Activated CD8-positive, alpha-beta T cell treated with anti-CD3 and anti-CD28 coated beads, Interleukin-2, amount 10 ng/mL, durations not matched to agents 7 days and 5 days (primary cell): ENCODE measurements at regions of chr19 and their contacts with region 1.

Region 1: DNA sequence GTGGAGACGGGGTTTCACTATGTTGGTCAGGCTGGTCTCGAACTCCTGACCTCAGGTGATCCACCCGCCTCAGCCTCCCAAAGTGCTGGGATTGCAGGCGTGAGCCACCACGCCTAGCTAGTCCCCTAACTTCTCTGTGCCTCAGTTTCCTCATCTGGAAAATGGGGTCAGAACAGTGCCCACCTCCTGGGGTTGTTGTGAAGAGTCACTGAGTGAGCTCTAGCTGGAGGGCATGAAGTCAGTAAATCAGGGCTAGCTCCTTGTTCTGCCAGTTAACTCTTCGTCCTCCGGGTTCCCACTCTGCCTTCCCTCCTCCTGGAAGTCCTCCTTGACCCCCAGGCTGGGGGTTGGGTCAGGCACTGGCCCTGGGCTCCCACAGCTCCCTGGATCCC is 9.5 kb downstream of the EHD2 start:
- DNase-seq: no peak
- ATAC-seq: no peak
- H3K4me3 Mint-ChIP-seq: no peak overlapping the region
- H3K27ac Mint-ChIP-seq: no peak overlapping the region
- H3K4me1 Mint-ChIP-seq: no peaks in the 10 kb centered on the region
- H3K27me3 Mint-ChIP-seq: peaks cover 8% of the 10 kb centered on the region

Region 2: DNA sequence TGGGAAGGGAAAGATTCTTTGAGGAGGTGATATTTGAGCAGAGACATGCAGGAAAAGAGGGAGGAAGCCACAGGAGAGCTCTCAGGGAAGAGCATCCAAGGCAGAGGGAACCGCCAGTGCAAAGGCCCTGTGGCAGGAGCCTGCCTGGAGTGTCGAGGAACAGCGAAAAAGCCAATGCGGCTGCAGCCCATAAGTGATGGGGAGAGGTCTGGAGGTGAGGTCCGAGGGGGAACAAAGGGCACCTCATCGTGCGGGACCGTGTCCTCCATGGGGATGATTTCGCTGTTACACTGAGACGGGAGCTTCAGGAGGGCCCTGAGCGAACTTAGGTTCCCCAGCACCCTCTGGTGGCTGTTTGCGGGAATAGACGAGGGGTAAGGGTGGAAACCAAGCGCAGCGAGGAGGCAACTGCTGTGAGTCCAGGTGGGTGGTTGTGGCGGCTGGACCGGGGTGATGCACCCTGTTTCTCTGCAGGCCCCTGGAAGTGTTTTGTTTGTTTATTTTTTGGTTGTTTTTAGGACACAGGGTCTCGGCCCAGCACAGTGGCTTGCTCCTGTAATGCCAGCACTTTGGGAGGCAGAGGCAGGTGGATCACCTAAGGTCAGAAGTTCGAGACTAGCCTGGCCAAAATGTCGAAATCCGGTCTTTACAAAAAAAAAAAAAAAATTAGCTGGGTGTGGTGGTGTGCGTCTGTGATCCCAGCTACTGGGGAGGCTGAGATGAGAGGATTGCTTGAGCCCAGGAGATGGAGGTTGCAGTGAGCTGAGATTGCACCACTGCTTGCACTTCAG is 15.4 kb before region 1 on chr19:
- CTCF ChIA-PET with region 1: interaction called, 33 read pairs
- POLR2A ChIA-PET with region 1: no interaction called
- DNase-seq: peak; percentile 87
- ATAC-seq: peak; percentile 96
- H3K4me3 Mint-ChIP-seq: no peak overlapping the region
- H3K27ac Mint-ChIP-seq: no peak overlapping the region
- H3K4me1 Mint-ChIP-seq: peaks cover 5% of the 10 kb centered on the region
- H3K27me3 Mint-ChIP-seq: peaks cover 5% of the 10 kb centered on the region

Region 3: DNA sequence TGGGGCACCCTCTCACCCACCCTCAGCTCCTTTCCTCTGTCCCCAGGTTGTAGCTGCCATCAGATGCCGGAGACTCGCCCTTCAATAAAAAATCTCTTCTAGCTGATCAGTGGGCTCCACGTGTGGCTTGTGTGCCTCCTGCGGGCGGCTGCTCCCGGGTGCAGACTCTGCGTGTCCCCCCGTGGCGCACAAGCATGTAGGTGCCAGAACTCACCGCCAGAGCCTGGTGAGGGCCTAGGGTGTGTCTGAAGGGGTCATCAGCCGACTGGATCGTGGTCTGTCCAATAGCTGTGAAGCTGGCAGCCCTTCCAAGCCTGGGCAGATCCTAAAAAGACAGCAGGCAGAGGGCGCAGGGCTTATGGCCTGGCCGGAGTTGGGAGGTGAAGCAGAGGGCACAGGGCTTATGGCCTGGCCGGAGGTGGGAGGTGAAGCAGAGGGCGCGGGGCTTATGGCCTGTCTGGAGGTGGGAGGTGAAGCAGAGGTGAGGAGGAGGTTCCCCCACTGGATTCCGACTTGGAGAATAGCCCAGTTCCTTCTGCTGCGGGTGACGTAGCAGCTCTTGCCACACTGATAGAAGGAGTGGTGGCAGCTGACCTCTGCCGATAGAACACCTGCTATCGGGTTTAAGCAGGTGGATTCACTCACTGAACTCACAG is 34.3 kb after region 1 on chr19:
- CTCF ChIA-PET with region 1: no interaction called
- POLR2A ChIA-PET with region 1: no interaction called
- DNase-seq: no peak
- ATAC-seq: no peak
- H3K4me3 Mint-ChIP-seq: no peak overlapping the region
- H3K27ac Mint-ChIP-seq: peak overlapping the region; percentile 57
- H3K4me1 Mint-ChIP-seq: peaks cover 20% of the 10 kb centered on the region
- H3K27me3 Mint-ChIP-seq: no peaks in the 10 kb centered on the region